MCF 10A (cell line): ENCODE measurements at regions of chr19 and their contacts with region 1.

Region 1: DNA sequence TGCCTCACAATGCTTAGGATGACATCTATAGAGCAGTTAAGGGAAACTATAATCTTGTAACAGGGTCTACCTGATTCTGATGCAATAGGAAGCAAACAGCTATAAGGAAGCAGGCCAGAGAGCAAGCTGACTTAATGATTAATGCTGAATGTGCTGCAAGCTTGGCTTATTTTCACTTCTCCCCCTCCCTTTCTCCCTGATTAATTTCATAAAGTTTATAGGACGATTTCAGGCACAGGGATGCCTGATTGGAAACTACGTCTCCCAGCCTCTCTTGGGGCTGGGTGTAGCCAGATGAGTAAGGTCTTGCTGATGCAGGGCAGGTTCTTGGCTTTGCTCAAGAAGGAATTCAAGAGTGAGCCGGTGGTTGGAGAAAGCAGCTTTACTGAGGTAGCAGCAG is 82.8 kb upstream of the MRI1 start:
- DNase-seq: no peak
- H3K4me3 Mint-ChIP-seq: no peak overlapping the region
- H3K27ac Mint-ChIP-seq: peak overlapping the region; percentile 77
- H3K4me1 Mint-ChIP-seq: peaks cover 11% of the 10 kb centered on the region
- H3K27me3 Mint-ChIP-seq: no peaks in the 10 kb centered on the region
- CTCF ChIP-seq: no peak

Region 2: DNA sequence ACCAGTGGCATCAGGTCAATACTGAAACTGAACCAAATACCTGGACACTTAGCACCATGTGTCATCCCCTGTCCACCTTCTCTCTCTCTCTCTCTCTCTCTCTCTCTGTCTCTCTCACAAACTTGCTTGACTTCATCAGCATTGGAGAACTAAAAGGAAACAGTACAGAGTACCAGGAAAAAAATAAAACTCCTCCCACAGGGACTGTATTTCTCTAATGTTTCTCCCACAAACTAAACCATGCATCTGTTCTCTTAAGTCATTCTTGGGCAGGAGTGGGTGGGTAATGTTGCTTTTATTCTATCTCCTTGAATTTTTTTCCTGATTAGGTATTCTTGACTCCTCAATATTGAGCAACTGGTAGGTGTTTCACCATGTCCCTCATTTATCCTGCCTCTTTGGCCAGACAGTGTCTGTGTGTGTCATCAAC is 62.3 kb before region 1 on chr19:
- CTCF ChIA-PET with region 1: no interaction called
- POLR2A ChIA-PET with region 1: interaction called, 4 read pairs
- intact Hi-C with region 1: loop called (anchors 5 kb)
- DNase-seq: peak; percentile 48
- H3K4me3 Mint-ChIP-seq: no peak overlapping the region
- H3K27ac Mint-ChIP-seq: peak overlapping the region; percentile 17
- H3K4me1 Mint-ChIP-seq: peaks cover 29% of the 10 kb centered on the region
- H3K27me3 Mint-ChIP-seq: no peaks in the 10 kb centered on the region
- CTCF ChIP-seq: no peak

Region 3: DNA sequence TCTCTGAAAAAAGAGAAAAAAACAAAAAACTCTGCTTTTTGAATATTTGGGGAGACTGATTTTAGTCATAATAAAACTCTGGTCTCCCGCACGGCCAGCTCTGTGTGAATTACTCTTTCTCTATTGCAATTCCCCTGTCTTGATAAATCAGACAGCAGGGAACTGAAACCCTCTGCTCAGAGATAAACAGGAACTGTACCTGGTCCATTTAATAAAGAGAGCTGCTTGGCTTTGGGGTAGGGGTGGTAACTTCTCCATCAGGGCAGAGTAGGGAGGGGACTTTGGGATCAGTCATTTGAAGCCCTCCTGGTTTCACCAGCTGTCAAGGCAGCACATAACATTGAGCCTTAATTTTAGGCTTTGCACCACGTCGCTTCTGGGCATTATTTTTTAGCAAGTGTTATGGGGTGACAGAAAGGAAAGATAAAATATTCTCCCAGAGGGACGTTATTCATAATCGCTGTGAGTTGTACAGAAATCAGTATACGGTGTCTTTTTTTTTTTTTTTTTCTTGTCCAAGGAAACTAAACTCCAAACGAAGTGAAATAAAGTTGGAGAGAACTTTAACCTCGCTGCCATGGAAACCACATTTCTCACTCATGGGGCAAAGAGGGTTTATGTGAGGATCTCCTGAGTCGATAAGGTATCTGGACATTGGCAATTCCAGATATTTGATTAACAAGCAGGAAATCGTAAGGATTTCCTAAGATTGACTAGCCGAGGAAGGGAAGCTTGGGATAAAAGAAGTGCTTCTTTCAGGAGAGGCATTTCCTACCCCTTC is 16.2 kb before region 1 on chr19:
- CTCF ChIA-PET with region 1: interaction called, 4 read pairs
- POLR2A ChIA-PET with region 1: interaction called, 27 read pairs
- intact Hi-C with region 1: no loop called
- DNase-seq: no peak
- H3K4me3 Mint-ChIP-seq: no peak overlapping the region
- H3K27ac Mint-ChIP-seq: no peak overlapping the region
- H3K4me1 Mint-ChIP-seq: no peaks in the 10 kb centered on the region
- H3K27me3 Mint-ChIP-seq: no peaks in the 10 kb centered on the region
- CTCF ChIP-seq: no peak

Region 4: GRCh38 chr19:13691569-13692435 is 10.3 kb after region 1 on chr19:
- CTCF ChIA-PET with region 1: no interaction called
- POLR2A ChIA-PET with region 1: interaction called, 49 read pairs
- intact Hi-C with region 1: no loop called
- DNase-seq: peak; percentile 62
- H3K4me3 Mint-ChIP-seq: no peak overlapping the region
- H3K27ac Mint-ChIP-seq: peak overlapping the region; percentile 52
- H3K4me1 Mint-ChIP-seq: peaks cover 12% of the 10 kb centered on the region
- H3K27me3 Mint-ChIP-seq: no peaks in the 10 kb centered on the region
- CTCF ChIP-seq: no peak

Region 5: DNA sequence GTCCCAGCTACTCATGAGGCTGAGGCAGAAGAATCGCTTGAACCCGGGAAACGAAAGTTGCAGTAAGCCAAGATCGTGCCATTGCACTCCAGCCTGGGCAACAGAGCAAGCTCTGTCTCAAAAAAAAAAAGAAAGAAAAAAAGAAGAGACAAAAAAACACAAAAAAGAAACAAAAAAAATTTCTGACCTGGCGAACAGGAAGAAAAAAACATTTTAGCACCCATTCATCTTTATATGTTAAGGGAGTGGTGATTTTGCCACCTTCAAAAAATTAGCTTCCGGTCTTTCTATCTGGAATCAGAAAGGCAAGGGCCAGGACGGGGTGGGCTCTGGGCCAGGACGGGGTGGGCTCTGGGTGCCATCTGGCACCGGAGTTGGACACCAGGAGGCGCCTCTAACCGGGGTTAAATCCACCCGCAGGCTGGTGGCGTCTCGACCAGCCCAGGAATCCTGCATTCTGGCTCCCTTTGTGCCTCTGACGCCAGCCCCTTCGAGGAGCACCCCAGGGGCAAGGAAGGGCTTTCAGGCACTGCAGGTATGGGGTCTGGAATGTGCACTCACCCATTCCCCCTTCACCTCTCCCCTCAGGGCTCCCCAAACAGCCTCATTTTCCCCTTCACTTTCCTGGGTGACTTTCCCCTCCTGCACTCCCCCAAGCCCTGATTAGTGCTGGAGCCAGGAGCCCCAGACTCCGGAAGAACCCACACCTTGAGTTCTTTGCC is 103.4 kb after region 1 on chr19:
- CTCF ChIA-PET with region 1: no interaction called
- POLR2A ChIA-PET with region 1: no interaction called
- intact Hi-C with region 1: no loop called
- DNase-seq: peak; percentile 78
- H3K4me3 Mint-ChIP-seq: no peak overlapping the region
- H3K27ac Mint-ChIP-seq: no peak overlapping the region
- H3K4me1 Mint-ChIP-seq: peaks cover 14% of the 10 kb centered on the region
- H3K27me3 Mint-ChIP-seq: no peaks in the 10 kb centered on the region
- CTCF ChIP-seq: peak; percentile 77

Region 6: GRCh38 chr19:13797870-13798269 is 116.4 kb after region 1 on chr19:
- CTCF ChIA-PET with region 1: no interaction called
- POLR2A ChIA-PET with region 1: no interaction called
- intact Hi-C with region 1: no loop called
- DNase-seq: peak; percentile 96
- H3K4me3 Mint-ChIP-seq: peak overlapping the region; percentile 95
- H3K27ac Mint-ChIP-seq: peak overlapping the region; percentile 93
- H3K4me1 Mint-ChIP-seq: peaks cover 22% of the 10 kb centered on the region
- H3K27me3 Mint-ChIP-seq: no peaks in the 10 kb centered on the region
- CTCF ChIP-seq: no peak